Endothelial cell of umbilical vein (primary cell): ENCODE measurements at regions of chr5 and their contacts with region 1.

Region 1: DNA sequence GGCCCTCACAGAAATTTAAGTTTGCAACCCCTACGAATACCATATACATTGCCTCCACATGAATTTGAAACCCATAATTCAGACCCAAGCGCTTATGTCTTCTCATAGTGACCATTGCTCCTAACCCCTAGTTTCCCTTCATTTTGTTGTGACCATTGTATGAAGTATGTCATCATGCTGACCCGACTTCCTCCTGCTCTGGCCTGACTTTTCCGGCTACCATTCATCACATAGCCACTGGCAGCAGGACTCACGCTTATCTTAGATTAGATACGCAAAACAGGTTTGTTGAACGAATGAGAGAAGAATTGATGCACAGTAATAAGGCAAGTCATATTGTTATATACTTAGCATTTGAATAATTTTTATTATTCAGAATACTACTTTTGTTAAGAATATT is 345.4 kb downstream of the FBXL17 start:
- DNase-seq: peak; percentile 77
- H3K4me3 ChIP-seq: no peak overlapping the region
- H3K27ac ChIP-seq: peak overlapping the region; percentile 13
- H3K4me1 ChIP-seq: peaks cover 12% of the 10 kb centered on the region
- H3K27me3 ChIP-seq: no peaks in the 10 kb centered on the region
- CTCF ChIP-seq: no peak
- POLR2A ChIP-seq: no peak

Region 2: DNA sequence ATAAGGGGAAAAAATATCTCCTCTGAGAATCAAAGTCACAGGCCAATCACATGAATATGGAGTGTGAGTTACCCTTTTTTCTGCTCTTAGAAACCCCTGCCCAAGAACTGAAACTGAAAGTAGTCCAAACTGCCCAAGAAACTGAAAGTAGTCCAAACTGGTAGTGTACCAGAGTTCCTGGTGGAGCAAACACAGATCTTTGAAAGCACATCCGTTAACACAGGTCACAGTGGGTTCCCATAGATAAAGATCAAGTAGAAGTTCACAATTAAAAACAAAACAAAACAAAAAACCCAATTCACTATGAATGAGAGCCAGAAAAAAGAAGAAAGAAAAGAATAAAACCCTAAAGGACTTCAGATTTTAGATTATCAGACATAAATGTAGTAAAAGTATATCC is 33.3 kb before region 1 on chr5:
- CTCF ChIA-PET with region 1: interaction called, 4 read pairs
- POLR2A ChIA-PET with region 1: no interaction called
- dilution Hi-C with region 1: no loop called
- intact Hi-C with region 1: loop called (anchors 2 kb)
- DNase-seq: peak; percentile 76
- H3K4me3 ChIP-seq: peak overlapping the region in 1 of 3 experiments; percentile 37
- H3K27ac ChIP-seq: no peak overlapping the region
- H3K4me1 ChIP-seq: peaks cover 3% of the 10 kb centered on the region
- H3K27me3 ChIP-seq: no peaks in the 10 kb centered on the region
- CTCF ChIP-seq: no peak
- POLR2A ChIP-seq: no peak